ENCODE measurements at regions of chrX and their contacts with region 1.

Region 1: DNA sequence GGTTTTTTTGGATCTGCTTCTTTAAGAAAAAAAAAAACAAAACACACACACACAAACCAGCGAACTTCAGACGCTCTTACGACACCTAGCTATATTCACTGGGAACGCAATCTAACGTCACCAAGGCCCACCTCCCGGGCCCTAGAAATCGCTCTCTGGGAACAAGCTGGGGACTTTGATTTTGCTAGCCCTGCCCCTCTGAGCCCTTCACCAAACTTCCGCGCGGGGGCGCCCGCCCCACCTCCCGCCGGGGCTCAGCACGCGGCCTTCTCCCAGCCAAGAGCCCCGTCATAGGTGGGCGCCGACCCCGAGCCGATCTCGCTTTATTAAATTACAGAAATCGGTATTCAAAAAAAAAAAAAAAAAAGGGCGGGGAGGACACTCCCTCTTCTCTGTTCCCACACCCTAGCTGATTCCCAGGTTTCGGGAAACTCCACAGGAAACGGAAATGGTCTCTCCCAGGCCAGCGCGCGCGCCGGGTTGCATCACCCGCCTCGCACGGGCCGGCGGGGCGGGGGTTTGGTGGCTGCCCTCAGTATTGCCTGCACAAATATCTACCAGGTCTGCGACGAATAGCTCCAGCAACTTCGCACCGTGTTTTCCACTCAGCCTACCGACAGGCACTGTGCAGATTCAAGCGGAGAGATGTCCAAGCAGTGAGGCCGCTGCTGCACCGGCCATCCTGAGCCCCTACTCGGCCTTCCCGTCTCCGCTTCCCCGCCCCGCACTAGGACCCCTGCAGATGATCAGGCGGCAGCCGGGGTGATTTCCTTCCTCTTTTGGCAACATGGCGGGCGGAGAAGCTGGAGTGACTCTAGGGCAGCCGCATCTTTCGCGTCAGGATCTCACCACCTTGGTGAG is at the start of gene EIF2S3:
- DNase-seq: peak; percentile 81 to 94 (median 90)
- H3K4me3 ChIP-seq: peak within 1 kb of the TSS in 2 of 3 experiments; percentile 61 to 85
- H3K4me3 Mint-ChIP-seq: peak within 1 kb of the TSS; percentile 89 to 97
- H3K27ac ChIP-seq: peak within 1 kb of the TSS in 1 of 2 donors; percentile 94
- H3K27ac Mint-ChIP-seq: peak within 1 kb of the TSS in 6 of 7 donors; percentile 99
- H3K4me1 ChIP-seq: peaks cover 7 to 9% of the 10 kb centered on the region in 2 donors
- H3K4me1 Mint-ChIP-seq: peaks cover 5% of the 10 kb centered on the region
- H3K27me3 ChIP-seq: peaks cover 0 to 9% of the 10 kb centered on the region in 2 donors
- H3K27me3 Mint-ChIP-seq: peaks cover 0 to 26% (median 0%) of the 10 kb centered on the region in 3 donors
- CTCF ChIP-seq: peak; percentile 54
- polyA plus RNA-seq, gene EIF2S3: 87.1 to 157 (median 87.2) TPM

Region 2: DNA sequence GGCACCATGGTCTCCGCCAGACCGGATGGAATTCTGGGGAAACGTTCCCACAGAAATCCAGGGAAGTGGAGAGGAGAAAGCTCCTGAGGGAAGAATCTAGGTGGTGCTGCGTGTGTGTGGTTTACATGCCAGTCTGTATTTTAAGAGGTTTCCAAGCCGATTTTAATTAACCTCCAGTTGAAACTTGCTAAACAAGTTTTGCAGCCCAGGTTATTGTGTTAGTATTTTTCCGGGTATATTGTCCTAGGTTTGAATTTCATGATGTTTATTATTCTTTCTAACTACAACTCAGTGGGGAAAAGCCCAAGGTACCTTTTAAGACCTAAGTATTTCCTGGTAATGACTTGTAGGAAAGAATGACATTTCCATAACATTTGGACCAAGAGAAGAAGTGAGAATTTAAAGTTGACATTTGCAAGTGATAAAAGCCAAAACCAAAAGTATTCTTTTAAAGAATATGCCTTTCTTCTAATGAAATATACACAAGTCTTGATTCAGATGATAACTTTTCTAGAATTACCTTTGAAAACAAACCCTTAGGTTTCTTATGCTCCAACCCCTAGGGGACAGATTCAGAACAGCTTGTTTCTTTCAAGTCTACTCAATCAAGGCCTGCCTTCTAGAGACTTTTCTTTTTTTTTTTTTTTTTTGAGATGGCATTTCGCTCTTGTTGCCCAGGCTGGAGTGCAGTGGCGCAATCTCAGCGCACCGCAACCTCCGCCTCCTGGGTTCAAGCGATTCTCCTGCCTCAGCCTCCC is 256.9 kb before region 1 on chrX:
- intact Hi-C with region 1: loop called in 1 of 2 experiments (anchors 10 kb)
- DNase-seq: no peak
- H3K4me3 ChIP-seq: no peak overlapping the region
- H3K4me3 Mint-ChIP-seq: no peak overlapping the region
- H3K27ac ChIP-seq: no peak overlapping the region
- H3K27ac Mint-ChIP-seq: no peak overlapping the region
- H3K4me1 ChIP-seq: peaks cover 4 to 5% of the 10 kb centered on the region in 2 donors
- H3K4me1 Mint-ChIP-seq: peaks cover 9% of the 10 kb centered on the region
- H3K27me3 ChIP-seq: no peaks in the 10 kb centered on the region
- H3K27me3 Mint-ChIP-seq: peaks cover 0 to 3% (median 0%) of the 10 kb centered on the region in 3 donors
- CTCF ChIP-seq: no peak

Region 3: GRCh38 chrX:23907498-23908218 is 146.8 kb before region 1 on chrX and contains the starts of genes APOO and CXorf58:
- intact Hi-C with region 1: loop called (anchors 10 kb)
- DNase-seq: peak; percentile 88 to 91 (median 90)
- H3K4me3 ChIP-seq: peak within 1 kb of the TSS; percentile 42 to 73 (median 54)
- H3K4me3 Mint-ChIP-seq: peak within 1 kb of the TSS; percentile 77 to 83
- H3K27ac ChIP-seq: peak within 1 kb of the TSS; percentile 71 to 86
- H3K27ac Mint-ChIP-seq: peak within 1 kb of the TSS; percentile 81 to 94 (median 91)
- H3K4me1 ChIP-seq: peaks cover 35 to 36% of the 10 kb centered on the region in 2 donors
- H3K4me1 Mint-ChIP-seq: peaks cover 25% of the 10 kb centered on the region
- H3K27me3 ChIP-seq: peaks cover 0 to 3% of the 10 kb centered on the region in 2 donors
- H3K27me3 Mint-ChIP-seq: peaks cover 0 to 27% (median 0%) of the 10 kb centered on the region in 3 donors
- CTCF ChIP-seq: peak; percentile 73
- polyA plus RNA-seq, gene APOO: 3.3 to 8.3 (median 4.6) TPM
- polyA plus RNA-seq, gene CXorf58: not detected

Region 4: GRCh38 chrX:23919706-23920320 is 134.6 kb before region 1 on chrX:
- intact Hi-C with region 1: loop called in 1 of 2 experiments (anchors 10 kb)
- DNase-seq: no peak
- H3K4me3 ChIP-seq: no peak overlapping the region
- H3K4me3 Mint-ChIP-seq: no peak overlapping the region
- H3K27ac ChIP-seq: no peak overlapping the region
- H3K27ac Mint-ChIP-seq: no peak overlapping the region
- H3K4me1 ChIP-seq: no peaks in the 10 kb centered on the region
- H3K4me1 Mint-ChIP-seq: no peaks in the 10 kb centered on the region
- H3K27me3 ChIP-seq: peaks cover 0 to 14% of the 10 kb centered on the region in 2 donors
- H3K27me3 Mint-ChIP-seq: peaks cover 0 to 11% (median 0%) of the 10 kb centered on the region in 3 donors
- CTCF ChIP-seq: no peak

Region 5: DNA sequence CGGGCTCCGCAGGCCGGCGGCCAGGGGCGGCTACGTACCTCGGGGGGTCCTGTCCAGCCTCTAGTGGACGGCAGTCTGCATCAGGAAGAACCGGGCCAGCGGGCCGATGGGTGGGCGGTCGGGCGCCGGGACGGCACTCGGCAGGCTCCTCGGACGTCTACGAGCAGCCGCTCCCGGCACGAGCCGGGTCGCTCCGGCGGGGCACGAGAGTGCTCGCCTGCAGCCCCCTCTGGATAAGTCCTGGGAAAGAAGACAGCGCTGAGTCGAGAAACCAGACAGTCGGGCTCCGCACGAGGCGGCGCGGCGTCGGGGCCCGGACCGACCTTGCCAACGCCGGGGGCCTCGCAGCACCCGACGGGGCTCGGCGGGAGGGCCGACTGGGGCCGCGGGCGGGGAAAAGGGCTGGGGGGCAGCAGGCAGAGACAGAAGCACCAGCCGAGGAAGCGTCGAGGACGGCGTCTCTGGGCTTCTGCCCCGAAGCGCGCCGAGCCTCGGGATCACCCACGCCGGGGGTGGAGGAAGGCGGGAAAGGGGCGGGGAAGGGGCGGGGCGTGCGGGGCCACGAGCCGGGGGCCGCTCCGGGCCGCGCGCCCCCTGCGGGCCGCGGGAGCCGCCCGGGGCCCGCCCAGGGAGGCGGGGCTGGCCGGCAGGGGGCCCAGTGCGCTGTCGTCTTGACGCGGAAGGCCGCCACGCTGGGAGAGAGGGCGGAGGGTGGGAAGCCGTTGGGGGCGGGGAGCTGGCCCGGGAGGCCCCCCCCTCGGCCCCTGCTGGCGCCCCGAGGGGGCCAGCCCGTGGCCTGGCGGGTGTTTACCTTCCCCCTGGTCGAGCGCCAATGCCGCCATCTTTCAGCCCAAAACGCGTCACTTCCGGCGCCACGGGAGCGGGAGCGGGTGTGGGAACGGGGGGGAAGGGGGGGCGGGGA is 29.3 kb before region 1 on chrX:
- intact Hi-C with region 1: loop called in 1 of 2 experiments (anchors 2 kb)
- DNase-seq: peak; percentile 59 to 84 (median 75)
- H3K4me3 ChIP-seq: peak overlapping the region; percentile 70 to 99 (median 81)
- H3K4me3 Mint-ChIP-seq: peak overlapping the region; percentile 79 to 84
- H3K27ac ChIP-seq: peak overlapping the region; percentile 90 to 92
- H3K27ac Mint-ChIP-seq: peak overlapping the region in 5 of 7 donors; percentile 11 to 93 (median 83)
- H3K4me1 ChIP-seq: peaks cover 0 to 4% of the 10 kb centered on the region in 2 donors
- H3K4me1 Mint-ChIP-seq: peaks cover 21% of the 10 kb centered on the region
- H3K27me3 ChIP-seq: peaks cover 0 to 36% of the 10 kb centered on the region in 2 donors
- H3K27me3 Mint-ChIP-seq: peaks cover 0 to 55% (median 0%) of the 10 kb centered on the region in 3 donors
- CTCF ChIP-seq: no peak

Region 6: DNA sequence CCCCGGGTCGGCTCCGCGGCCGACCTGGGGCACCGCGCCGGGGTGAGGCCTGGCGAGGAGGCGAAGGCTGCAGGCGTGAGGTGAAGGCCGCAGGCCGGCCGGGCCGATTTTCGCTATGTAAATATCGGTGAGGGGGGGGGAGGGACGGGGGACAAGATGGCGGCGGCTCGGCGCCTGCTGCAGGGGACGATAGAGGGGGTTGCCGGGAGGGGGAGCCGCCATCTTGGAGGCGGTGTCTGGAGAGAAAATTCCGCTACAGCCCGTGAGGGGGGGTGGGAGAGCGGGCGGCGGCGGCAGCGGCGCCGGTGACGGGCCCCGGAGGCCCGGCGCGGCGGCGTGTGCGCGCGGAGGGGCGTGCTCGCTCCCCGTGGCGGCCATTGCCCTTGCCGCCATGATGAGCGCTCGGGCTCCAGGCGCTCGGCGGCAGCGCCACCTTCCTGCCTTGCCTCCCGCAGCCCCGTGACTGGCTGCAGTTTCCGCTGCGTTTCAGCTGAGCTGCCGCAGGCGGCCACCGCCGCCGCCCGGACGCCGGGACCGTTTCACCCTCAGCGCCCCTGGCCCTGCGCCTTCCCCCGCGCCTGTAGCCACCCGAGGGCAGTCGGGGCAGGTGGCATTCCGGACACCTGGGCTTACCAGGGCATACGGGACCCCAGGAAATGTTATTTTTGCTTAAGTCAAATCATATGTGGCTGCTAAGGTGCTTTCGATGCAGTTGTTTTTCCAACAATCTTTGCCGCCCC is 95.8 kb after region 1 on chrX:
- intact Hi-C with region 1: loop called in 1 of 2 experiments (anchors 2 kb)
- DNase-seq: peak; percentile 74 to 94 (median 88)
- H3K4me3 ChIP-seq: peak overlapping the region; percentile 70 to 94 (median 85)
- H3K4me3 Mint-ChIP-seq: peak overlapping the region; percentile 79 to 89
- H3K27ac ChIP-seq: peak overlapping the region; percentile 83 to 87
- H3K27ac Mint-ChIP-seq: peak overlapping the region; percentile 84 to 94 (median 90)
- H3K4me1 ChIP-seq: peaks cover 23 to 55% of the 10 kb centered on the region in 2 donors
- H3K4me1 Mint-ChIP-seq: peaks cover 39% of the 10 kb centered on the region
- H3K27me3 ChIP-seq: no peaks in the 10 kb centered on the region
- H3K27me3 Mint-ChIP-seq: no peaks in the 10 kb centered on the region
- CTCF ChIP-seq: peak; percentile 26

Measured in CD14-positive monocyte (primary cell).